Left cardiac atrium (tissue), 4 donors: ENCODE measurements at regions of chr12 and their contacts with region 1.

Region 1: GRCh38 chr12:124939428-124940142 is 25.1 kb upstream of the UBC start:
- DNase-seq: peak; percentile 81
- ATAC-seq: peak; percentile 86 to 87

Region 2: DNA sequence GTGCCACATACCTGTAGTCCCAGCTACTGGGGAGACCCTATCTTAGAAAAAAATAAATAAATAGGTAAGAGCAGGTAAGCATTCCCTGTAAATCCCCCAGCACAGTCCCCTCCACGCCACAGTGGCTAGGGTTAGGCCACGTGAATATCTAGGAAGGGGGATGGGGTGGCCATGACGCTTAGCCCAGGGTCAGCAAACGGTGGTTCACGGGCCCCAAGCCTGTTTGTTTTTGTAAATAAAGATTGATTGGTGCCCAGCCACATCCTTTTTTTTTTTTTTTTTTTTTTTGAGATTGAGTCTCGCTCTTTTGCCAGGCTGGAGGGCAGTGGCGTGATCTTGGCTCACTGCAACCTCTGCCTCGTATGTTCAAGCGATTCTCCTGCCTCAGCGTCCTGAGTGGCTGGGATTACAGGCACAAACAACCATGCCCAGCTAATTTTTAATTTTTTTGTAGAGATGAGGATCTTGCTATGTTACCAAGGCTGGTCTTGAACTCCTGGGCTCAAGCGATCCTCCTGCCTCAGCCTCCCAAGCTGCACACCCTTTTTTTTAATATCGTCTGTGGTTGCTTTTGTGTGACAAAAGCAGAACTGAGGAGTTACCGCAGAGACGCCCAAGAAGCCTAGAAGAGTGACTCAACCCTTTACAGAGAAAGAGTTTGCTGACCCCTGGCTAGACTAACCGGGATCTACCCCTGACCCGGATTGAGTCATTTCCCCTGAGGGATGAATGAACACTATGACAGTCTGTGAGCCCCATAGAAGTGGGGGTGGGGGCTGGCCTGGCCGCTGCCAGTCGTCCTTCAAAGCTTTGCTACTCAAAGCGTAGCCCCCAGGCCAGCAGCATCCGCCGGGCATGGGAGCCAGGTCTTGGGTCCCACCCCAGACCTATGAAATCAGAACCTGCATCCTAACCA is 258.5 kb before region 1 on chr12:
- intact Hi-C with region 1: no loop called
- DNase-seq: peak; percentile 83
- ATAC-seq: peak; percentile 71 to 75

Region 3: DNA sequence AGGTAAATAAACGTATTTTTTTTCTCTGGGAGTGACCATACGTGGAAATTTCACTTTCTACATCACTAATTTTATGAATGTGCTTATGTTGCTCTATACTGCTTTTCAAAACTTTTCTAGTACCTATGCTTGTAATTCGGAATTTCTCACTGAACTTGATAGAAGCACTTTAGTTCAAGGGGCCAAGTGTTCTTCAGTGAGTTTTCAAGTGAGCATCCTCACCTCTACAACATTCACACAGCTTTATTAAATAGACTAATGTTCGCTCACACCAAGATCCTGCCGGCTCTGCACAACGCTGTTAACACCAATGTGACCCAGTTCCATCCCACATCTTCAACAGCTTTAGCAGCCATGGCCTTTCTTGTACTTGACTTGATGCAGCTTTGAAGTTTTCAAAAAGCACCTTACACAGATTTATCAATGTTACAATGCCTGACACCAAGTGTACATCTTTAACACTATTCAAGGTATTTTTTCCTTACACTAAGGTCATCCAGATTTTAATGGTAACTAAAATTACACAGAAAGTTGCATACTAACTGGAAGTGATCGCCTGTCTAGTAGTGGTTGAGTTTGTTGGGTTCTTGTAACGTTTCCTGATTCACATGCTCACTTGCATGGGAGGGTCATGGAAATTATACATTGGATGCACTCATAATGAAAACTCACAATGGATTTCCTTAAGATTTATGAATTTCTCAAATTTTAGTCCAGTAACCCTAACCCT is 29.6 kb before region 1 on chr12:
- intact Hi-C with region 1: loop called in 1 of 2 experiments (anchors 2 kb)
- DNase-seq: no peak
- ATAC-seq: no peak